ENCODE measurements at regions of chr19 and their contacts with region 1.

Region 1: DNA sequence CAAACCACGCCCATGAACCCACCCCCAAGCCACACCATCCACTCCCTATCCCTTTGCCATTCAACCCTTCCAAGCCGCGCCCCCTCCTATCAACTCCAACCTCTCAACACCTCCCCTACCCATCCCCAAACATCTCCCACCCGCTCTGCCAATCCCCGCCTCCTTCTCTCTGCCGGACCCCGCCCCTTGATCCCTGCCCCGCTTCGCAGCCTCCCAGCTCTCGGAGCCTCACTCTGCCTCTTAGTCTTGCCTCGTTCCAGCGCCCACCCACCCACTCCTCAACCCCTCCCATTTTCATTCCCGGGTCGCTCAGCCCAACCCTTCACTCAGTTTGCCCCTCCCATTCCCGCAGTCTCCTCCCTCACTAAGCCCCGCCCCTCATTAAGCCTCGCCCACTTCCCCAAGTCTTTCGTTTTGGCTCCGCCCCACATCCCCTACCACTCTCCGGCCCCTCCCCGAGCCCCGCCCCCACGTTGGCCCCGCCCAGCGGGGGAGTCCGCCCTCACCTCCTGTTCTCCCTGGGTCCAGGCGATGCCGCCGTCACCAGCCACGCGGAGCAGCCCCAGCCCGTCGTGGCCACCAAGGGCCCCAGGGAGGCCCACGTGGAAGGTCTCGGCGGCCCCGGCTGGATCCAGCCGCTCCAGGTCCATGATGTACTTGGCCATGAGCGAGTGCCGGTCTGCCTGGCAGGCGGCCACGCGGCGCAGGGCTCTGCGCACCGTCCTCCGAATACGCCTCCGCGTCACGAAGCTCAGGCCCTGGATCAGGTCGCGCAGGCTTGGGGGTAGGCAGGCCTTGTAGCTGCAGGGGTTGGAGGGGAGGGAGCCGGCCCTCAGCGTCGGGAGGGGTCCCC is 5.7 kb downstream of the JAK3 start:
- DNase-seq: peak; percentile 97
- ATAC-seq: peak; percentile 85
- H3K4me3 ChIP-seq: peak overlapping the region; percentile 76
- H3K27ac ChIP-seq: peak overlapping the region; percentile 51
- H3K4me1 ChIP-seq: peaks cover 19% of the 10 kb centered on the region
- H3K27me3 ChIP-seq: no peaks in the 10 kb centered on the region
- CTCF ChIP-seq: no peak

Region 2: DNA sequence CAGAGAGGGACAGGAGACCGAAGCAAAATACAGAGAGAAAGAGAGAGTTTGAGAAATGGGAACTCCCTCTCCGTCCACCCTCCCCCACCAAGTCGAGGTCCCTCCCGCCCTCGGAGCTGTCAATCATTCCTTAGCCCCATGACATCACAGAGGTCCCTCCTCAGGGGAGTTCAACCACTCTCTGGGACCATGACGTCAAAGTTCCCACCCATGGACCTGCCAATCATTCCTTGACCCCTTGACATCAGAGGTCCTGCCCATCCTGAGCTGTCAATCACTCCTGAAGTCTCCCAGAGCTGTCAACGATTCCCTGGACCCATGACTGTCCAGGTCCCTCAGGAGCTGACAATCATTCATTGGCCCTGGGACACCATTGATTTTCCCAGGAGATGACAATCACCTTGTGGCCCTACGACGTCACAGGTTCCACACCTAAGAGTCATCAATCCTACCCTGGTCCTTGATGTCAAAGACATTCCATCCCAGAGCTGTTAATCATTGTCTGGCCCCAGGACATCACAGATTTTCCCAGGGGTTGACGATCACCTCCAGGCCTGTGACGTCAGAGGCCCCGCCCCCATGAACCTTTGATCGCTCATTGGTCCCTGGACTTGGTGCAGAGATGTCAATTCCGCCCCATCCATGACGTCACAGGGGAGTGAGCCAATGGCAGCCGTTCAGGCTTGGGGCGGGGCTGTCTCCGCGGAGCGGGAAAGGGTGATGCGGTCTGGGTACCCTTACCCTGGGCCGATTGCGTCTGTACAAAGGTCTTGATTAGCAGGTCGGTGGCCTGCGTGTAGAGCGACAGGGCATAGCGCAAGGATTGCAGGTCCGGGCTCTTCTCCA is 224.9 kb before region 1 on chr19:
- CTCF ChIA-PET with region 1: no interaction called
- POLR2A ChIA-PET with region 1: no interaction called
- intact Hi-C with region 1: loop called (anchors 5 kb)
- DNase-seq: no peak
- ATAC-seq: no peak
- H3K4me3 ChIP-seq: no peak overlapping the region
- H3K27ac ChIP-seq: no peak overlapping the region
- H3K4me1 ChIP-seq: no peaks in the 10 kb centered on the region
- H3K27me3 ChIP-seq: no peaks in the 10 kb centered on the region
- CTCF ChIP-seq: no peak

Region 3: GRCh38 chr19:17747205-17748098 is 94.6 kb before region 1 on chr19:
- CTCF ChIA-PET with region 1: no interaction called
- POLR2A ChIA-PET with region 1: no interaction called
- intact Hi-C with region 1: no loop called
- DNase-seq: peak; percentile 97
- ATAC-seq: peak; percentile 100
- H3K4me3 ChIP-seq: peak overlapping the region; percentile 72
- H3K27ac ChIP-seq: no peak overlapping the region
- H3K4me1 ChIP-seq: no peaks in the 10 kb centered on the region
- H3K27me3 ChIP-seq: no peaks in the 10 kb centered on the region
- CTCF ChIP-seq: no peak

Region 4: DNA sequence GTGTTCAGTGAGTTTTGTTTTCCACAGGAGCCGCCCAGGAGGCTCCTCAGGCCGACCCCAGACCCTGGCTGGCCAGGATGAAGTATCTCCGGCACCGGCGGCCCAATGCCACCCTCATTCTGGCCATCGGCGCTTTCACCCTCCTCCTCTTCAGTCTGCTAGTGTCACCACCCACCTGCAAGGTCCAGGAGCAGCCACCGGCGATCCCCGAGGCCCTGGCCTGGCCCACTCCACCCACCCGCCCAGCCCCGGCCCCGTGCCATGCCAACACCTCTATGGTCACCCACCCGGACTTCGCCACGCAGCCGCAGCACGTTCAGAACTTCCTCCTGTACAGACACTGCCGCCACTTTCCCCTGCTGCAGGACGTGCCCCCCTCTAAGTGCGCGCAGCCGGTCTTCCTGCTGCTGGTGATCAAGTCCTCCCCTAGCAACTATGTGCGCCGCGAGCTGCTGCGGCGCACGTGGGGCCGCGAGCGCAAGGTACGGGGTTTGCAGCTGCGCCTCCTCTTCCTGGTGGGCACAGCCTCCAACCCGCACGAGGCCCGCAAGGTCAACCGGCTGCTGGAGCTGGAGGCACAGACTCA is 34.2 kb before region 1 on chr19:
- CTCF ChIA-PET with region 1: no interaction called
- POLR2A ChIA-PET with region 1: no interaction called
- intact Hi-C with region 1: no loop called
- DNase-seq: no peak
- ATAC-seq: no peak
- H3K4me3 ChIP-seq: no peak overlapping the region
- H3K27ac ChIP-seq: no peak overlapping the region
- H3K4me1 ChIP-seq: no peaks in the 10 kb centered on the region
- H3K27me3 ChIP-seq: no peaks in the 10 kb centered on the region
- CTCF ChIP-seq: no peak

Region 5: DNA sequence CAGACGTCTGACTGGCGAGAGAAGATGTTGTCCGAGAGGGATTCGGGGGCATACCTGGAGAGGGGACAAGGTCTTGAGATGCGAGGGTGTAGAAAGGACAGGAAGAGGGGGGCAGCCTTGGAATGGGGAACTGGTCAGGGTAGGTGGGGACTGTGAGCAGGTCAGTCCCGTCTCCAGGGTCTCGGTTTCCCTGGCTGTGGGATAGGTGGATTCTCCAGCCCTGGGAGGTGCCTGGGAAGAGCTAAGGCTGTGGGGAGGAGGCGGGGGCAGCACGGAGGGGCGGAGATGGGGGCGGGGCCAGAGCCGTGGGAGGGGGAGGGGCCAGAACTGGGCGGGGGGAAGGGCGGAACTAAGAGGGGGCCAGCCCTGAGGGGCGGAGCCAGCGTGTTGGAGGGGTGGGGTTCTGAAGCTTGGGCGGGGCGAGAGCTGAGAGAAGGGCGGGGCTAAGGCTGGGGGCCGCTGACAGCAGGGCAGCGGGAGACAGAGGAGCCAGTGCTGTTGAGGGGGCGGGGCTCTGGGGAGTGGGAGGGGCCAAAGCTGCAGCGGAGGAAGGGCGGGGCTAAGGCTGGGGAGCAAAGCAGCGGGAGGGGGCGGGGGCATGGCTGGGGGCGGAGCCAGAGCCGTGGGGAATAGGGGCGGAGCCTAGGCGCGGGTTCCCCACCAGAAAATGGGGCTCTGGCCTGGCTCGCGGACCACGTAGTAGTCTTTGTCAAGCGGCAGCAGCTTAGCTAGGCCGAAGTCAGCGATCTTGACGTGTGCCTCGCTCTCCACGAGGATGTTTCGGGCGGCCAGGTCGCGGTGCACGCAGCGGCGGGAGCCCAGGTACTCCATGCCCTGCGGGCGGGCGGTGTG is 11.2 kb before region 1 on chr19:
- CTCF ChIA-PET with region 1: interaction called, 3 read pairs
- POLR2A ChIA-PET with region 1: interaction called, 28 read pairs
- intact Hi-C with region 1: loop called (anchors 1 kb)
- DNase-seq: peak; percentile 94
- ATAC-seq: peak; percentile 89
- H3K4me3 ChIP-seq: peak overlapping the region; percentile 93
- H3K27ac ChIP-seq: peak overlapping the region; percentile 47
- H3K4me1 ChIP-seq: peaks cover 10% of the 10 kb centered on the region; the same call in 1 of the 2 replicates
- H3K27me3 ChIP-seq: no peaks in the 10 kb centered on the region
- CTCF ChIP-seq: no peak

Region 6: GRCh38 chr19:18086590-18087138 is 244.6 kb after region 1 on chr19 and contains the start of gene IL12RB1:
- CTCF ChIA-PET with region 1: no interaction called
- POLR2A ChIA-PET with region 1: no interaction called
- intact Hi-C with region 1: no loop called
- DNase-seq: no peak
- ATAC-seq: no peak
- H3K4me3 ChIP-seq: no peak within 1 kb of the TSS
- H3K27ac ChIP-seq: no peak within 1 kb of the TSS
- H3K4me1 ChIP-seq: no peaks in the 10 kb centered on the region
- H3K27me3 ChIP-seq: no peaks in the 10 kb centered on the region
- CTCF ChIP-seq: no peak
- total RNA-seq, gene IL12RB1: not detected in 2 replicates